Vagina (tissue), 2 donors: ENCODE measurements at regions of chr3 and their contacts with region 1.

Region 1: GRCh38 chr3:77329116-77329515 is 289.2 kb downstream of the ROBO2 start:
- DNase-seq: no peak
- H3K4me3 ChIP-seq: no peak overlapping the region
- H3K27ac ChIP-seq: no peak overlapping the region
- H3K4me1 ChIP-seq: no peaks in the 10 kb centered on the region
- H3K27me3 ChIP-seq: no peaks in the 10 kb centered on the region
- CTCF ChIP-seq: no peak
- POLR2A ChIP-seq: no peak

Region 2: GRCh38 chr3:76010252-76010651 is 1318.9 kb before region 1 on chr3:
- intact Hi-C with region 1: loop called (anchors 5 kb)
- DNase-seq: no peak
- H3K4me3 ChIP-seq: no peak overlapping the region
- H3K27ac ChIP-seq: no peak overlapping the region
- H3K4me1 ChIP-seq: no peaks in the 10 kb centered on the region
- H3K27me3 ChIP-seq: no peaks in the 10 kb centered on the region
- CTCF ChIP-seq: no peak
- POLR2A ChIP-seq: no peak